ENCODE measurements at regions of chr10 and their contacts with region 1.

Region 1: GRCh38 chr10:114173921-114174694 is at the start of gene CCDC186:
- DNase-seq: peak; percentile 97 to 99 (median 98)
- ATAC-seq: peak; percentile 97
- H3K4me3 ChIP-seq: peak within 1 kb of the TSS; percentile 73 to 97
- H3K4me3 Mint-ChIP-seq: peak within 1 kb of the TSS; percentile 94
- H3K27ac ChIP-seq: peak within 1 kb of the TSS; percentile 82 to 92
- H3K27ac Mint-ChIP-seq: peak within 1 kb of the TSS; percentile 98
- H3K4me1 ChIP-seq: peaks cover 11% of the 10 kb centered on the region
- H3K4me1 Mint-ChIP-seq: peaks cover 48% of the 10 kb centered on the region
- H3K27me3 ChIP-seq: no peaks in the 10 kb centered on the region
- H3K27me3 Mint-ChIP-seq: peaks cover 2% of the 10 kb centered on the region
- CTCF ChIP-seq: no peak
- total RNA-seq, gene CCDC186: 57.9 to 67.7 TPM

Region 2: DNA sequence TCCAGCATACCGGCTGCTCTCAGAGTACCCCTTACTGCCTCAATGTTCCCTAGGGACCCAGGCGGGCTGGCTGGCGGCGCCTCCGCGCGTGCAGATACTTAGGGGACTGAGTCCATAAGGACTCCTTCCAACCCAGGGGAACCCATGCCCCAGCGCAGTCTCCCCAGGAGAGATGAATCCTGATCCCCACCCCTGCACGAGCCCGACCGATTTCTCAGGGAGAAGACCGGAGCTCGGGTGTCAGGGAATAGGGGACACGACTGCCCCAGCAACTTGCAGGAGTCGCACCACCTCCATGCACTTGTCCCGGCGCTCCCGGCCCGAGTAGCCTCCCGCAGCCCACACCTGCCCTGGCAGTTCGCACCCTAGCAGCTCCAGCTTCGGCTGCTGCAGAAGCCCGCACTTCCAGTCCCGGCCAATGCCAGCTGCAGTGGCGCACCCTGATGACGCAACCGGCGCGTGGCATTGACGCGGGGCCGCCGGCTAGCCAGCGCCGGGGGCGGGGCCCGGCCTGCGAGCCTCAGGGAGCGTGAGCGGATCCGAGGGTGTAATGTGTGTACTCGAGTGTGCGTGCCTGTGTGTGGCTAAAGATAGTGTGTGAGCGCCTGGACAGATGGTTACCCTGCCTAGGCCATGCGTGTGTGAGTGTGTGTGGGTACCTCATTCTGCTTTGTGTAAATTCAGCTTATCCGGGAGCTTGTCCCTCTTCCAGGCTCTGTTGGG is 1990.6 kb before region 1 on chr10 and contains the start of gene GPAM:
- CTCF ChIA-PET with region 1: no interaction called
- POLR2A ChIA-PET with region 1: no interaction called
- intact Hi-C with region 1: loop called in 1 of 2 experiments (anchors 5 kb)
- DNase-seq: peak; percentile 95 to 100 (median 99)
- ATAC-seq: peak; percentile 98
- H3K4me3 ChIP-seq: peak within 1 kb of the TSS; percentile 65 to 92
- H3K4me3 Mint-ChIP-seq: peak within 1 kb of the TSS; percentile 87
- H3K27ac ChIP-seq: peak within 1 kb of the TSS; percentile 76 to 78
- H3K27ac Mint-ChIP-seq: peak within 1 kb of the TSS; percentile 93
- H3K4me1 ChIP-seq: peaks cover 17% of the 10 kb centered on the region
- H3K4me1 Mint-ChIP-seq: peaks cover 28% of the 10 kb centered on the region
- H3K27me3 ChIP-seq: no peaks in the 10 kb centered on the region
- H3K27me3 Mint-ChIP-seq: no peaks in the 10 kb centered on the region
- CTCF ChIP-seq: no peak
- total RNA-seq, gene GPAM: 3.2 to 4.2 TPM

Region 3: GRCh38 chr10:112949875-112950507 is 1224.1 kb before region 1 on chr10 and contains the start of gene TCF7L2:
- CTCF ChIA-PET with region 1: no interaction called
- POLR2A ChIA-PET with region 1: no interaction called
- intact Hi-C with region 1: loop called in 1 of 2 experiments (anchors 10 kb)
- DNase-seq: peak; percentile 28 to 89 (median 67)
- ATAC-seq: peak; percentile 66
- H3K4me3 ChIP-seq: peak within 1 kb of the TSS; percentile 73 to 87
- H3K4me3 Mint-ChIP-seq: peak within 1 kb of the TSS; percentile 92
- H3K27ac ChIP-seq: peak within 1 kb of the TSS; percentile 50 to 54
- H3K27ac Mint-ChIP-seq: peak within 1 kb of the TSS; percentile 92
- H3K4me1 ChIP-seq: peaks cover 5% of the 10 kb centered on the region
- H3K4me1 Mint-ChIP-seq: peaks cover 24% of the 10 kb centered on the region
- H3K27me3 ChIP-seq: peaks cover 0 to 2% of the 10 kb centered on the region in 2 experiments
- H3K27me3 Mint-ChIP-seq: peaks cover 2% of the 10 kb centered on the region
- CTCF ChIP-seq: no peak
- total RNA-seq, gene TCF7L2: 8.6 to 9.6 TPM

Region 4: DNA sequence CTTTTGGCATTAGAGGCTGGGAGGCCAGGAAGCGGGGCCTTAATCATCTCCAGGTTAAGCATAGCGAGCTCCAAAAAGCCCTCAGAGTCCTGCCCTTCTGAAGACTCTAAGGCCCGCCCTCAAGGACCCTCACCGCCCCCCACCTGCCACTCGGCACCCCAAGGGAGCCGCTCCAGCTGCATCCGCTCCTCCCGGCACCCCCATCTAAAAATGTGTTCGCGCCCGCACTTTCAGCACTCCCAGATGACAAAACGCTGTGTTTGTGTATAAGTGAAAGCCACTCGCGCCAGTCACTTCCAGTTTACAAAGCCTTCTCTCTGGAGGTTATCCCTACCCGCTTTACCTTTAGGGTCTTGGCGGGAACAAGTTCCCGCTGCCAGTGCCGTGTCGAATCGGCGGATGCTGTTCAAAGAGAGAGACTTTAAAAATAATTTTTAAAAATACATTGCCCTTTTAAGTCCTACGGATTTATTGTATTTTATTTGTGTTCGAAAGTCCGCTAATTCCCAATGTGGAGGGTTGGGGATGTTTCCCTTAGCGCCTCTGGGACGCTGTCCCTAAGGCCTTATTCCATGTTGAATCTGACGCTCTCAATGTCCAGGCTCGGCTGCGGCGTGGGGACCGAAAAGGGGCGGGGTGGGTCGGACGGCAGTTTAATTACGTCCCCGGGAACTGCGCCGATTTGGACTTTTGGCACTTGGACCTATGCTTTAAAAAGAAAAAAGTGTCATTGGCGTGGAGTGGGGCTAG is 319.9 kb before region 1 on chr10 and contains the starts of genes DCLRE1A and NHLRC2:
- CTCF ChIA-PET with region 1: no interaction called
- POLR2A ChIA-PET with region 1: no interaction called
- intact Hi-C with region 1: loop called (anchors 1 to 5 kb)
- DNase-seq: peak; percentile 39 to 80 (median 64)
- ATAC-seq: peak; percentile 43
- H3K4me3 ChIP-seq: peak within 1 kb of the TSS; percentile 76 to 84
- H3K4me3 Mint-ChIP-seq: peak within 1 kb of the TSS; percentile 95
- H3K27ac ChIP-seq: peak within 1 kb of the TSS; percentile 73 to 83
- H3K27ac Mint-ChIP-seq: peak within 1 kb of the TSS; percentile 93
- H3K4me1 ChIP-seq: peaks cover 30% of the 10 kb centered on the region
- H3K4me1 Mint-ChIP-seq: peaks cover 63% of the 10 kb centered on the region
- H3K27me3 ChIP-seq: no peaks in the 10 kb centered on the region
- H3K27me3 Mint-ChIP-seq: no peaks in the 10 kb centered on the region
- CTCF ChIP-seq: no peak
- total RNA-seq, gene DCLRE1A: 0.49 to 0.89 TPM
- total RNA-seq, gene NHLRC2: 6.3 to 7.0 TPM

Region 5: DNA sequence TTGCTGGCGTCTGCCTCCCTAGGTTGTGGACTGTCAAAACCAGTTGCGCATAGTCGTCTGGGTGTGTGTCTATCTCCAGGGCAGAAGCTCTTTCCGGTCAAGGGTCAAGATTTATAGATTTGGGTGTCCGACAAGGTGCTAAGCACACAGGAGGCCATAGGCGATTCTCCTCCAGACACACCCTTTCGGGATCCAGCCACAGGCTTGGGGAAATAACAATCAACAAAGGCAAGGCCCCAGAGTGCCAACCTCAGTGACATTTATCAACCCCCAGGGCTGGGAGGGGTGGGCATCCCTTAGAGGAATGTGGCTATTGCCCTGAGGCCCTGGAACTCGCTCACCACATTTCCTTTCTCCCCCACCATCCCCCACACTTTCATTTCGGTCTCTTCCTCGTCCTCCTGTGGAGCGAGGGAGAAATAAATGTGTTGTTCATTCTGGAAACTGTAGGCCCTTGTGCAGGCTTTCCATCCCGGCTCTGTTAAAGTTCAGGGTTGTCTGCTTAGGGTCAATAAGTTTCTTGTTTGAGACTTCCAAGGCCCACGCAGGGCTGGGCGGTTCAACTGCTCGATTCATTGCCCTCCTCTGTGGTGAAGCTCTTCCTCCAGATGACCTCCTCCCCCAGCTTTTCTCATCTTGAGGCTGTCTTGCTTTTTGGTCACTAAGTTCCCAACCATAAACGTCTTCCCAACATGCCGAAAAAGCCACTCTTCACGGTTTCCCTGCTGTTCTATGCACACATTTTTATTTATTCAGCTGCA is 172.3 kb after region 1 on chr10:
- CTCF ChIA-PET with region 1: no interaction called
- POLR2A ChIA-PET with region 1: no interaction called
- intact Hi-C with region 1: no loop called
- DNase-seq: no peak
- ATAC-seq: no peak
- H3K4me3 ChIP-seq: no peak overlapping the region
- H3K4me3 Mint-ChIP-seq: no peak overlapping the region
- H3K27ac ChIP-seq: no peak overlapping the region
- H3K27ac Mint-ChIP-seq: no peak overlapping the region
- H3K4me1 ChIP-seq: no peaks in the 10 kb centered on the region
- H3K4me1 Mint-ChIP-seq: no peaks in the 10 kb centered on the region
- H3K27me3 ChIP-seq: no peaks in the 10 kb centered on the region
- H3K27me3 Mint-ChIP-seq: no peaks in the 10 kb centered on the region
- CTCF ChIP-seq: no peak

Region 6: GRCh38 chr10:114526504-114527238 is 352.6 kb after region 1 on chr10:
- CTCF ChIA-PET with region 1: no interaction called
- POLR2A ChIA-PET with region 1: interaction called, 4 read pairs
- intact Hi-C with region 1: loop called in 1 of 2 experiments (anchors 5 kb)
- DNase-seq: peak; percentile 80 to 98 (median 90)
- ATAC-seq: peak; percentile 86
- H3K4me3 ChIP-seq: peak overlapping the region; percentile 69 to 70
- H3K4me3 Mint-ChIP-seq: peak overlapping the region; percentile 92
- H3K27ac ChIP-seq: peak overlapping the region; percentile 89 to 93
- H3K27ac Mint-ChIP-seq: peak overlapping the region; percentile 97
- H3K4me1 ChIP-seq: peaks cover 47% of the 10 kb centered on the region
- H3K4me1 Mint-ChIP-seq: peaks cover 59% of the 10 kb centered on the region
- H3K27me3 ChIP-seq: no peaks in the 10 kb centered on the region
- H3K27me3 Mint-ChIP-seq: no peaks in the 10 kb centered on the region
- CTCF ChIP-seq: no peak

Region 7: GRCh38 chr10:114821293-114821914 is 647.3 kb after region 1 on chr10 and contains the start of gene FHIP2A:
- CTCF ChIA-PET with region 1: interaction called, 7 read pairs
- POLR2A ChIA-PET with region 1: interaction called, 3 read pairs
- intact Hi-C with region 1: loop called (anchors 1 to 5 kb)
- DNase-seq: peak; percentile 73 to 91 (median 82)
- ATAC-seq: peak; percentile 93
- H3K4me3 ChIP-seq: peak within 1 kb of the TSS; percentile 70 to 75
- H3K4me3 Mint-ChIP-seq: peak within 1 kb of the TSS; percentile 95
- H3K27ac ChIP-seq: peak within 1 kb of the TSS; percentile 78 to 79
- H3K27ac Mint-ChIP-seq: peak within 1 kb of the TSS; percentile 94
- H3K4me1 ChIP-seq: peaks cover 11% of the 10 kb centered on the region
- H3K4me1 Mint-ChIP-seq: peaks cover 38% of the 10 kb centered on the region
- H3K27me3 ChIP-seq: no peaks in the 10 kb centered on the region
- H3K27me3 Mint-ChIP-seq: peaks cover 2% of the 10 kb centered on the region
- CTCF ChIP-seq: peak; percentile 35
- total RNA-seq, gene FHIP2A: 62.0 to 66.4 TPM